ENCODE measurements at regions of chr10 and their contacts with region 1.

Region 1: GRCh38 chr10:92848441-92849233 is at the start of gene EXOC6:
- DNase-seq: peak; percentile 78 to 93 (median 85)
- ATAC-seq: peak; percentile 84
- H3K4me3 ChIP-seq: peak within 1 kb of the TSS; percentile 66 to 76
- H3K4me3 Mint-ChIP-seq: peak within 1 kb of the TSS; percentile 87
- H3K27ac ChIP-seq: peak within 1 kb of the TSS; percentile 76 to 87
- H3K27ac Mint-ChIP-seq: peak within 1 kb of the TSS; percentile 91
- H3K4me1 ChIP-seq: peaks cover 11% of the 10 kb centered on the region
- H3K4me1 Mint-ChIP-seq: peaks cover 17% of the 10 kb centered on the region
- H3K27me3 ChIP-seq: no peaks in the 10 kb centered on the region
- H3K27me3 Mint-ChIP-seq: no peaks in the 10 kb centered on the region
- CTCF ChIP-seq: no peak
- total RNA-seq, gene EXOC6: 6.0 to 7.0 TPM

Region 2: DNA sequence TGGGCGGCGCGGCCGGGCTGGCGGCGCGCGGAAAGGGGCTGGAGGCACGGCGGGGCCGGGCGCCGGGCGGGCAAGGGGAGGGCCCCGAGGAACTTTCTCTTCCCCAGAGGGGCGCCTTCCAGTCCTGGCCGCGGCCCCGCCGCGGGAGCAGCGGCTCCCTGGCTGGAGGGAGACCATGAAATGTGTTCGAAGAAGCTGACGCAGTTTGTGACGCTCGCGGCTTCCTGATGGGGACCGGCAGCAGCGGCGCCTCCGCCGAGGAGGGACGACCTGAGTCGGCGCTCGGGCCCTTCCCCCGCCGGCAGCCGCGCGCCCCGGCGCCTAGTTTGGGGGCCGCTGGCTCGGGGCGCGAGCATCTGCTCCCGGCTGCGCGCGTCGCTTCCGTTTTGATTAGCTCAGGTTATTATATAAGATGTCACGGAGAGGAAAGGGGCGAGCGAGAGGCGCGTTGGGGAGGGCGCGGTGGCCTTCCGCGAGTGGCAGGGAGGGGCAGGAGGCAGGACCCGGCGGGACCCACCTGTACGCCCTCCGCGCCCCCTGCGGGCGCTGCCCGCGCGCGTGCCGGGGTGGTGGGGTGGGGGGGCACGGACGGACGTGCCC is 1685.3 kb before region 1 on chr10:
- CTCF ChIA-PET with region 1: no interaction called
- POLR2A ChIA-PET with region 1: no interaction called
- intact Hi-C with region 1: loop called in 1 of 2 experiments (anchors 5 kb)
- DNase-seq: peak; percentile 68 to 94 (median 86)
- ATAC-seq: peak; percentile 74
- H3K4me3 ChIP-seq: peak overlapping the region; percentile 74 to 80
- H3K4me3 Mint-ChIP-seq: peak overlapping the region; percentile 93
- H3K27ac ChIP-seq: peak overlapping the region; percentile 91 to 93
- H3K27ac Mint-ChIP-seq: peak overlapping the region; percentile 99
- H3K4me1 ChIP-seq: peaks cover 22% of the 10 kb centered on the region
- H3K4me1 Mint-ChIP-seq: peaks cover 62% of the 10 kb centered on the region
- H3K27me3 ChIP-seq: no peaks in the 10 kb centered on the region
- H3K27me3 Mint-ChIP-seq: no peaks in the 10 kb centered on the region
- CTCF ChIP-seq: no peak

Region 3: GRCh38 chr10:91797874-91798648 is 1050.6 kb before region 1 on chr10 and contains the start of gene TNKS2:
- CTCF ChIA-PET with region 1: no interaction called
- POLR2A ChIA-PET with region 1: no interaction called
- intact Hi-C with region 1: loop called in 1 of 2 experiments (anchors 5 kb)
- DNase-seq: peak; percentile 83 to 96 (median 92)
- ATAC-seq: peak; percentile 69
- H3K4me3 ChIP-seq: peak within 1 kb of the TSS; percentile 81 to 85
- H3K4me3 Mint-ChIP-seq: peak within 1 kb of the TSS; percentile 99
- H3K27ac ChIP-seq: peak within 1 kb of the TSS; percentile 88 to 91
- H3K27ac Mint-ChIP-seq: peak within 1 kb of the TSS; percentile 99
- H3K4me1 ChIP-seq: peaks cover 35% of the 10 kb centered on the region
- H3K4me1 Mint-ChIP-seq: peaks cover 64% of the 10 kb centered on the region
- H3K27me3 ChIP-seq: no peaks in the 10 kb centered on the region
- H3K27me3 Mint-ChIP-seq: no peaks in the 10 kb centered on the region
- CTCF ChIP-seq: no peak
- total RNA-seq, gene TNKS2: 46.4 to 49.4 TPM

Region 4: DNA sequence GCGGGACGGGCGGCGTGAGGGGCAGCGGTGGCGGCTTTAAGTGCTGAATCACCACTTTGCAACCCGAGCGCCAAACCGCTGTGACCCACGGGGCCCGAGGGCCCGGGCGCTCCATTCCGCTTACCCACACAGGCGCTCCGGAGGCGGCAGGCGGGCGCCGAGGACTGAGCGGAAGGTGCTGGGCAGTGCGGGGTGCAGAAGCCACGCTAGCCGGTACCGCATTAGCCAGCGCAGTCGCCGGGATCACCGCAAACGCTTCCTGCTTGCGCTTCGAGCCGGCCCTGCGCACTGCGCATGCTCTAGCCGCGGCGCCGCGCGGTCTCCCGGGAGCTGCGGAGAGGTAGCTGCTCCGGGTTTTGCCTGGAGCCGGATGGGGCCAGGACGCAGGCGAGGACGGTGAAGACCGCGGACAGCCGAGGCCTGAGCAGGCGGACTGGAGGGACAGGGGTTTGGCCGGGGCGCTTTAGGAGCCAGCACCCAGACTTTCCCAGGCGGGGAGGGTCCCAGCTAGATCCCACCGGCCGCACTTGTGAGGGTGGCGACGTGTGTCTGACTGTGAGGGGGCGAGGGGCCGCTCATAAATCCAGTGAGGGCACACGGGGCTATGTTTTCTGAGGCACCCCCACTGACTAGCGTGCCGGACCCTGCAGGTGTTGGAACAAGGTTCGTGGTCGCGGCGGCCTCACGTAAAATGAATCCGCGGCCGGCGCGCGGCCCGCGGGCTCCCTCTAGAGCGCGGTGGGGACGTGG is 274.7 kb before region 1 on chr10 and contains the start of gene IDE:
- CTCF ChIA-PET with region 1: no interaction called
- POLR2A ChIA-PET with region 1: interaction called, 3 read pairs
- intact Hi-C with region 1: loop called in 1 of 2 experiments (anchors 5 kb)
- DNase-seq: peak; percentile 43 to 89 (median 76)
- ATAC-seq: peak; percentile 70
- H3K4me3 ChIP-seq: peak within 1 kb of the TSS; percentile 85 to 100
- H3K4me3 Mint-ChIP-seq: peak within 1 kb of the TSS; percentile 93
- H3K27ac ChIP-seq: peak within 1 kb of the TSS; percentile 74 to 92
- H3K27ac Mint-ChIP-seq: peak within 1 kb of the TSS; percentile 93
- H3K4me1 ChIP-seq: peaks cover 18% of the 10 kb centered on the region
- H3K4me1 Mint-ChIP-seq: peaks cover 42% of the 10 kb centered on the region
- H3K27me3 ChIP-seq: no peaks in the 10 kb centered on the region
- H3K27me3 Mint-ChIP-seq: no peaks in the 10 kb centered on the region
- CTCF ChIP-seq: no peak
- total RNA-seq, gene IDE: 12.1 to 13.2 TPM

Region 5: GRCh38 chr10:92810934-92811532 is 37.6 kb before region 1 on chr10:
- CTCF ChIA-PET with region 1: no interaction called
- POLR2A ChIA-PET with region 1: no interaction called
- intact Hi-C with region 1: no loop called
- DNase-seq: no peak
- ATAC-seq: no peak
- H3K4me3 ChIP-seq: no peak overlapping the region
- H3K4me3 Mint-ChIP-seq: no peak overlapping the region
- H3K27ac ChIP-seq: no peak overlapping the region
- H3K27ac Mint-ChIP-seq: no peak overlapping the region
- H3K4me1 ChIP-seq: no peaks in the 10 kb centered on the region
- H3K4me1 Mint-ChIP-seq: no peaks in the 10 kb centered on the region
- H3K27me3 ChIP-seq: no peaks in the 10 kb centered on the region
- H3K27me3 Mint-ChIP-seq: peaks cover 15% of the 10 kb centered on the region
- CTCF ChIP-seq: no peak

Region 6: GRCh38 chr10:92880233-92880861 is 31.7 kb after region 1 on chr10:
- CTCF ChIA-PET with region 1: interaction called, 14 read pairs
- POLR2A ChIA-PET with region 1: interaction called, 7 read pairs
- intact Hi-C with region 1: loop called (anchors 1 to 2 kb)
- DNase-seq: peak in 3 of 9 experiments; percentile 5 to 56 (median 45)
- ATAC-seq: no peak
- H3K4me3 ChIP-seq: no peak overlapping the region
- H3K4me3 Mint-ChIP-seq: no peak overlapping the region
- H3K27ac ChIP-seq: no peak overlapping the region
- H3K27ac Mint-ChIP-seq: no peak overlapping the region
- H3K4me1 ChIP-seq: peaks cover 12% of the 10 kb centered on the region
- H3K4me1 Mint-ChIP-seq: peaks cover 23% of the 10 kb centered on the region
- H3K27me3 ChIP-seq: no peaks in the 10 kb centered on the region
- H3K27me3 Mint-ChIP-seq: no peaks in the 10 kb centered on the region
- CTCF ChIP-seq: peak; percentile 52

Region 7: DNA sequence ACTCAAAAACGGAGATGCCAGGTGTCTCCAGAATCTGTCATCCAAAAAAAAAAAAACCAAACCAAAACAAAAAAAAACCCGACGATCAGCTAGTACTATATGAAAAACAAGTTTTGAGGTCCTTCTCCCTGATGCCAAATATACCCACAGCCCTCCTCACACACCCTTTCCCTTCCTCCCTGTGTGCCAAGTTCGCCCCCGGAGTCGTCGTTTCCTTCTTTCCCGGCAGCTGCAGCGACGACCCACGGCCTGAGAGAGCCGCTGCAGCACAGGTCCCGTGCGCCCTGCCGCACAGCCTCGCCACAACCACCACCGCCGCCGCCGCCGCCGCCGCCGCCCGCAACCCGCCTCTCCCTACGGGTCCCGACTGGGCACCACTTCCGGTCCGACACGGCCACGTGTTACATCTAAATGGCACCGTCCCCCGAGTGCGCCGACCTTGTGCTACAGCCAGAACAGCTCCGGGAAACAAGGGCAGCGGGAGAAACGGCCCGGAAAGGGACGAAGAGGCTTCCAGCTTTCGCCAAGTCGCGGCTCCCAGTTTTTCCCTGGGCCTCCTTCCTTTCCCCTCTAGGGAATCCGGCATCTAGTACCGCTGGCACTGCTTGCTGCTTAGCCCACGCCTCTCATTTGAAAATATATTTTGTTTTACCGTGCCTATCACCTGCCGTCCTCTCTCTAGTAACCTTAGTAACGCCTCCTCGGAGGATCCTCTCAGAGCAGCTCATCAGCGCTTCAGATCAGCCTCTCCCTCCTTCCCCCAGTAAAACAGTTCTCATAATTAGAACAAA is 853.8 kb after region 1 on chr10 and contains the start of gene FRA10AC1:
- CTCF ChIA-PET with region 1: no interaction called
- POLR2A ChIA-PET with region 1: no interaction called
- intact Hi-C with region 1: loop called (anchors 10 kb)
- DNase-seq: peak; percentile 73 to 94 (median 89)
- ATAC-seq: peak; percentile 83
- H3K4me3 ChIP-seq: peak within 1 kb of the TSS; percentile 90 to 96
- H3K4me3 Mint-ChIP-seq: no peak within 1 kb of the TSS
- H3K27ac ChIP-seq: peak within 1 kb of the TSS; percentile 82 to 86
- H3K27ac Mint-ChIP-seq: no peak within 1 kb of the TSS
- H3K4me1 ChIP-seq: peaks cover 14% of the 10 kb centered on the region
- H3K4me1 Mint-ChIP-seq: peaks cover 15% of the 10 kb centered on the region
- H3K27me3 ChIP-seq: no peaks in the 10 kb centered on the region
- H3K27me3 Mint-ChIP-seq: no peaks in the 10 kb centered on the region
- CTCF ChIP-seq: no peak
- total RNA-seq, gene FRA10AC1: 6.2 to 7.0 TPM